ENCODE measurements at regions of chr16 and their contacts with region 1.

Region 1: DNA sequence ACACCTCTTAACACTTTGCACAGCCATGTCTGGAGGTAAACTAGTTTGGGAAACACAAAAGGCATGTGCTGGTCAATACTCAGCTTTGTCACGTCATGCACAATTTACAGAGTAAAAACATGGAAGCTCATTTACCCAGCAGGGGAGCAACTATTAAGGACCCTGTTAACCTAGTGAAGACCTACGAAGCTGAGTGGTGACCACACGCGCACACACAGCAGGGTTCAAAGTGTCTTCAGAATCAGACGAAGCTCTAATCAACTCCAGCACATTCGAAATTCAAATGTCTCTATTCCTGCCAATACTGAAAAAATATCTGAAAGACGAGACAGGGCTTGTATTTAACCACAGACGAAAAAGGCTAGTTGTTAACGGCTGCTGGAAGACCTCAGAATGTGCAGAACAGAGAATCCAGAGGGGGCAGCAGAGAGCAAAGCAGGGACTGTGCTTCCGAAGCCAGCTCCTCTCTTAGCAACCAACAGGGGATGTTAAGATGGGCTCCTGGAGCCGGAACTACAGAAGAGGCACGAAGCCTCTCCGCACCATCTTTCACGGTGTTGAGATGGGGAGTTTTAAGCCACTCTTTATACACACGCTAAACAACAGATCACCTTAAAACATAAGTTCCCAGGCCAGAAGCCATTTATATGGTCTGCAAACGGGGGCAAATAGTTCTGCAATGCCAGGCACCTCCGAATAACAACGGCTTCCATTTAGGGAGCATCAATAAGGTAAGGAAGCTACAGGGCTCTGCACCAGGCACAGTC is 45.7 kb downstream of the CMTM4 start:
- DNase-seq: peak; percentile 65 to 90 (median 82)
- ATAC-seq: peak; percentile 99
- H3K4me3 ChIP-seq: peak overlapping the region; percentile 35
- H3K4me3 Mint-ChIP-seq: peak overlapping the region; percentile 72
- H3K27ac ChIP-seq: no peak overlapping the region
- H3K27ac Mint-ChIP-seq: peak overlapping the region; percentile 55
- H3K4me1 ChIP-seq: peaks cover 9% of the 10 kb centered on the region
- H3K4me1 Mint-ChIP-seq: peaks cover 8% of the 10 kb centered on the region
- H3K27me3 ChIP-seq: no peaks in the 10 kb centered on the region
- H3K27me3 Mint-ChIP-seq: peaks cover 5% of the 10 kb centered on the region
- CTCF ChIP-seq: peak; percentile 94

Region 2: GRCh38 chr16:66639091-66639885 is 11.6 kb before region 1 on chr16:
- CTCF ChIA-PET with region 1: interaction called, 15 read pairs
- POLR2A ChIA-PET with region 1: no interaction called
- intact Hi-C with region 1: no loop called
- DNase-seq: no peak
- ATAC-seq: no peak
- H3K4me3 ChIP-seq: no peak overlapping the region
- H3K4me3 Mint-ChIP-seq: no peak overlapping the region
- H3K27ac ChIP-seq: no peak overlapping the region
- H3K27ac Mint-ChIP-seq: no peak overlapping the region
- H3K4me1 ChIP-seq: no peaks in the 10 kb centered on the region
- H3K4me1 Mint-ChIP-seq: no peaks in the 10 kb centered on the region
- H3K27me3 ChIP-seq: no peaks in the 10 kb centered on the region
- H3K27me3 Mint-ChIP-seq: peaks cover 2% of the 10 kb centered on the region
- CTCF ChIP-seq: no peak

Region 3: DNA sequence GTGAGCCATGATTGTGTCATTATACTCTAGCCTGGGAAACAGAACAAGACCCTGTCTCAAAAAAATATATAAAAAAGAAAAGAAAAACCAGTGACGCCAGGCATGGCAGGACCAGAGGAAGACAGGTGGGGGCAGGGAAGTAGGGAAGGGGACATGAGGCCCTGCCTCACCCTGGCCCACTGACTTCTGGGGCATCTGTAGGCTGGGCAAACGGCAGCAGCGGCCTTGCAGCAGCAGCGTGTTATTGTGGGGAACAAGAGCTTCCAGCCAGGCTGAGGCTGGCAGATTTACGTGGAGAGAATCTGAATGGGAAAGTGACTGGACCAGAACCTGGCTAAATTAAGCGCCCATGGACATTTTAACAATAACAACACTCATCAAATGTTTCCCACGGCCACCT is 26.3 kb after region 1 on chr16:
- CTCF ChIA-PET with region 1: no interaction called
- POLR2A ChIA-PET with region 1: no interaction called
- intact Hi-C with region 1: loop called in 1 of 2 experiments (anchors 2 kb)
- DNase-seq: no peak
- ATAC-seq: no peak
- H3K4me3 ChIP-seq: no peak overlapping the region
- H3K4me3 Mint-ChIP-seq: no peak overlapping the region
- H3K27ac ChIP-seq: no peak overlapping the region
- H3K27ac Mint-ChIP-seq: no peak overlapping the region
- H3K4me1 ChIP-seq: no peaks in the 10 kb centered on the region
- H3K4me1 Mint-ChIP-seq: no peaks in the 10 kb centered on the region
- H3K27me3 ChIP-seq: no peaks in the 10 kb centered on the region
- H3K27me3 Mint-ChIP-seq: no peaks in the 10 kb centered on the region
- CTCF ChIP-seq: no peak

Region 4: GRCh38 chr16:66728117-66728787 is 77.4 kb after region 1 on chr16:
- CTCF ChIA-PET with region 1: interaction called, 18 read pairs
- POLR2A ChIA-PET with region 1: no interaction called
- intact Hi-C with region 1: loop called in 1 of 2 experiments (anchors 10 kb)
- DNase-seq: peak in 2 of 9 experiments; percentile 49 to 64
- ATAC-seq: peak; percentile 83
- H3K4me3 ChIP-seq: no peak overlapping the region
- H3K4me3 Mint-ChIP-seq: no peak overlapping the region
- H3K27ac ChIP-seq: no peak overlapping the region
- H3K27ac Mint-ChIP-seq: no peak overlapping the region
- H3K4me1 ChIP-seq: no peaks in the 10 kb centered on the region
- H3K4me1 Mint-ChIP-seq: peaks cover 4% of the 10 kb centered on the region
- H3K27me3 ChIP-seq: no peaks in the 10 kb centered on the region
- H3K27me3 Mint-ChIP-seq: no peaks in the 10 kb centered on the region
- CTCF ChIP-seq: peak; percentile 70

Region 5: GRCh38 chr16:66740010-66740409 is 89.1 kb after region 1 on chr16:
- CTCF ChIA-PET with region 1: interaction called, 11 read pairs
- POLR2A ChIA-PET with region 1: no interaction called
- intact Hi-C with region 1: no loop called
- DNase-seq: peak in 4 of 9 experiments; percentile 27 to 63 (median 44)
- ATAC-seq: peak; percentile 79
- H3K4me3 ChIP-seq: no peak overlapping the region
- H3K4me3 Mint-ChIP-seq: no peak overlapping the region
- H3K27ac ChIP-seq: no peak overlapping the region
- H3K27ac Mint-ChIP-seq: no peak overlapping the region
- H3K4me1 ChIP-seq: no peaks in the 10 kb centered on the region
- H3K4me1 Mint-ChIP-seq: peaks cover 24% of the 10 kb centered on the region
- H3K27me3 ChIP-seq: no peaks in the 10 kb centered on the region
- H3K27me3 Mint-ChIP-seq: no peaks in the 10 kb centered on the region
- CTCF ChIP-seq: peak; percentile 65

Measured in CD8-positive, alpha-beta T cell (primary cell).